ENCODE measurements at regions of chr1 and their contacts with region 1.

Region 1: GRCh38 chr1:182348961-182349747 is 42.4 kb downstream of the GLUL start:
- DNase-seq: peak; percentile 78

Region 2: GRCh38 chr1:182229921-182230491 is 119.1 kb before region 1 on chr1:
- intact Hi-C with region 1: loop called (anchors 5 kb)
- DNase-seq: no peak

Region 3: GRCh38 chr1:182259229-182259872 is 89.8 kb before region 1 on chr1:
- intact Hi-C with region 1: loop called (anchors 2 kb)
- DNase-seq: no peak